B cell (primary cell): ENCODE measurements at regions of chr4 and their contacts with region 1.

Region 1: GRCh38 chr4:67545199-67546003 is at the start of gene CENPC:
- DNase-seq: peak; percentile 93
- ATAC-seq: peak; percentile 92
- H3K4me3 ChIP-seq: peak within 1 kb of the TSS; percentile 65 to 96 (median 86)
- H3K4me3 Mint-ChIP-seq: peak within 1 kb of the TSS; percentile 97
- H3K27ac ChIP-seq: peak within 1 kb of the TSS; percentile 92 to 98
- H3K27ac Mint-ChIP-seq: peak within 1 kb of the TSS; percentile 97
- H3K4me1 ChIP-seq: peaks cover 17 to 20% of the 10 kb centered on the region in 2 donors
- H3K4me1 Mint-ChIP-seq: peaks cover 49% of the 10 kb centered on the region
- H3K27me3 ChIP-seq: no peaks in the 10 kb centered on the region
- H3K27me3 Mint-ChIP-seq: no peaks in the 10 kb centered on the region
- CTCF ChIP-seq: no peak
- total RNA-seq, gene CENPC: 67.0 and 76.5 TPM in 2 replicates

Region 2: GRCh38 chr4:67366311-67366861 is 179.0 kb before region 1 on chr4:
- CTCF ChIA-PET with region 1: no interaction called
- POLR2A ChIA-PET with region 1: no interaction called
- intact Hi-C with region 1: no loop called
- DNase-seq: no peak
- ATAC-seq: no peak
- H3K4me3 ChIP-seq: no peak overlapping the region
- H3K4me3 Mint-ChIP-seq: no peak overlapping the region
- H3K27ac ChIP-seq: no peak overlapping the region
- H3K27ac Mint-ChIP-seq: no peak overlapping the region
- H3K4me1 ChIP-seq: no peaks in the 10 kb centered on the region
- H3K4me1 Mint-ChIP-seq: no peaks in the 10 kb centered on the region
- H3K27me3 ChIP-seq: no peaks in the 10 kb centered on the region
- H3K27me3 Mint-ChIP-seq: peaks cover 17% of the 10 kb centered on the region
- CTCF ChIP-seq: no peak

Region 3: GRCh38 chr4:67558493-67558892 is 13.1 kb after region 1 on chr4 and contains the start of gene STAP1:
- CTCF ChIA-PET with region 1: interaction called, 9 read pairs
- POLR2A ChIA-PET with region 1: interaction called, 4 read pairs
- intact Hi-C with region 1: loop called (anchors 1 kb)
- DNase-seq: peak; percentile 84
- ATAC-seq: peak; percentile 86
- H3K4me3 ChIP-seq: peak within 1 kb of the TSS; percentile 70 to 97 (median 83)
- H3K4me3 Mint-ChIP-seq: peak within 1 kb of the TSS; percentile 94
- H3K27ac ChIP-seq: peak within 1 kb of the TSS; percentile 63 to 82
- H3K27ac Mint-ChIP-seq: peak within 1 kb of the TSS; percentile 97
- H3K4me1 ChIP-seq: peaks cover 39 to 58% of the 10 kb centered on the region in 2 donors
- H3K4me1 Mint-ChIP-seq: peaks cover 68% of the 10 kb centered on the region
- H3K27me3 ChIP-seq: no peaks in the 10 kb centered on the region
- H3K27me3 Mint-ChIP-seq: no peaks in the 10 kb centered on the region
- CTCF ChIP-seq: no peak
- total RNA-seq, gene STAP1: 62.3 and 63.0 TPM in 2 replicates

Region 4: GRCh38 chr4:67580577-67580976 is 35.2 kb after region 1 on chr4:
- CTCF ChIA-PET with region 1: interaction called, 12 read pairs
- POLR2A ChIA-PET with region 1: interaction called, 3 read pairs
- intact Hi-C with region 1: loop called (anchors 1 kb)
- DNase-seq: no peak
- ATAC-seq: no peak
- H3K4me3 ChIP-seq: peak overlapping the region in 1 of 5 experiments; percentile 34
- H3K4me3 Mint-ChIP-seq: peak overlapping the region; percentile 72
- H3K27ac ChIP-seq: peak overlapping the region; percentile 76 to 89
- H3K27ac Mint-ChIP-seq: peak overlapping the region; percentile 91
- H3K4me1 ChIP-seq: peaks cover 40 to 52% of the 10 kb centered on the region in 2 donors
- H3K4me1 Mint-ChIP-seq: peaks cover 53% of the 10 kb centered on the region
- H3K27me3 ChIP-seq: no peaks in the 10 kb centered on the region
- H3K27me3 Mint-ChIP-seq: no peaks in the 10 kb centered on the region
- CTCF ChIP-seq: no peak

Region 5: DNA sequence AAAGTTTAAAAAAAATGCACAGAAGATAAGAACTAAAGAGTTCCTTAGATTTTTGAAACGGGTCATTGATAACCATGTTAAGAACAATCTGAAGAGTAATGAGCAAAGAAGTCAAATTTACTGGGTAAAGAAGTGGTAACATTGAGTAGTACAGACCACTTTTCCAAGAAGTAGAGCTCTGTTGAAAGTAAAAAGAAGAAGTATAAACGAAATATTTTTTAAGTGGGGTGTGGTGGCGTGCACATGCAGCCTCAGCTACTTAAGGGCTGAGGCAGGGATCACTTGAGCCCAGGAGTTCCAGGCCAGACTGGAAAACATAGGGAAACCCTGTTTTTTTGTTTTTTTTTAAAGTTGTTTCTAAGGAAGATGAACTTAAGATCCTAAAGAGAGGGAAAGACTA is 87.1 kb after region 1 on chr4:
- CTCF ChIA-PET with region 1: interaction called, 11 read pairs
- POLR2A ChIA-PET with region 1: interaction called, 3 read pairs
- intact Hi-C with region 1: loop called (anchors 2 kb)
- DNase-seq: peak; percentile 45
- ATAC-seq: peak; percentile 94
- H3K4me3 ChIP-seq: no peak overlapping the region
- H3K4me3 Mint-ChIP-seq: peak overlapping the region; percentile 50
- H3K27ac ChIP-seq: no peak overlapping the region
- H3K27ac Mint-ChIP-seq: peak overlapping the region; percentile 16
- H3K4me1 ChIP-seq: peaks cover 6 to 16% of the 10 kb centered on the region in 2 donors
- H3K4me1 Mint-ChIP-seq: peaks cover 15% of the 10 kb centered on the region
- H3K27me3 ChIP-seq: no peaks in the 10 kb centered on the region
- H3K27me3 Mint-ChIP-seq: no peaks in the 10 kb centered on the region
- CTCF ChIP-seq: no peak

Region 6: DNA sequence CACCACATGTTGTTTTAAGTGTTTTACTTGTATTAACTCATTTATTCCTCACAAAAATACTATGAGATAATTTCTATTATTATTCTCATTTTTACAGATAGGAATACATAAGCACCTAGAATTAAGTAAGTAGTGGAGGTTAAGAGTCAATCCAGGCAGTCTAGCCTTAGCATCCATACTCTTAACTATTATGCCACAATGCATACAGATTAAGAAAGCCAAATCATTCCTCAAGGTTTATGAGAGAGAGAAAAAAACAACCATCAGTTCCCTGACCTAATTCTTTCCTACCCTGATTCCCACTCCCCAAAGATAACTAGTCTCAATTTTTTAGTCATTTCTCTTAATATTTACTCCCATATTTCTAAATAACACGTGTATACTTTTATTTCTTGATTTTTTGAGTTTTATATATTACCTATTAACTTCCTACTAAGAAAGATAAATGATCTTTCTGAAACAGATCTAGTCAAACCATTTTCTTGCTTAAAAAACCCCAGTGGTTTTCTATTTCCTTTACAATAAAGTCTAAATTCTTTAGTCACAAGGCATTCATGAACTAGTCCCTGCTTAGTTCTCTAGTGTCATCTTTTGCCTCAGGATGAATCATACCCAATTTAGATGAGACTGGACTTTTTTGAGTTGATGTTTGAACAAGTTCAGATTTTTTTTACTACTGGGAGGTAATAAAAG is 139.6 kb after region 1 on chr4:
- CTCF ChIA-PET with region 1: no interaction called
- POLR2A ChIA-PET with region 1: no interaction called
- intact Hi-C with region 1: no loop called
- DNase-seq: no peak
- ATAC-seq: no peak
- H3K4me3 ChIP-seq: no peak overlapping the region
- H3K4me3 Mint-ChIP-seq: no peak overlapping the region
- H3K27ac ChIP-seq: no peak overlapping the region
- H3K27ac Mint-ChIP-seq: no peak overlapping the region
- H3K4me1 ChIP-seq: no peaks in the 10 kb centered on the region
- H3K4me1 Mint-ChIP-seq: no peaks in the 10 kb centered on the region
- H3K27me3 ChIP-seq: no peaks in the 10 kb centered on the region
- H3K27me3 Mint-ChIP-seq: no peaks in the 10 kb centered on the region
- CTCF ChIP-seq: no peak

Region 7: GRCh38 chr4:67746797-67747495 is 201.5 kb after region 1 on chr4:
- CTCF ChIA-PET with region 1: interaction called, 21 read pairs
- POLR2A ChIA-PET with region 1: interaction called, 3 read pairs
- intact Hi-C with region 1: loop called (anchors 1 kb)
- DNase-seq: peak; percentile 59
- ATAC-seq: peak; percentile 21
- H3K4me3 ChIP-seq: no peak overlapping the region
- H3K4me3 Mint-ChIP-seq: no peak overlapping the region
- H3K27ac ChIP-seq: no peak overlapping the region
- H3K27ac Mint-ChIP-seq: no peak overlapping the region
- H3K4me1 ChIP-seq: no peaks in the 10 kb centered on the region
- H3K4me1 Mint-ChIP-seq: no peaks in the 10 kb centered on the region
- H3K27me3 ChIP-seq: no peaks in the 10 kb centered on the region
- H3K27me3 Mint-ChIP-seq: no peaks in the 10 kb centered on the region
- CTCF ChIP-seq: peak; percentile 90

Region 8: GRCh38 chr4:68349649-68350360 is 804.4 kb after region 1 on chr4 and contains the start of gene YTHDC1:
- CTCF ChIA-PET with region 1: no interaction called
- POLR2A ChIA-PET with region 1: no interaction called
- intact Hi-C with region 1: loop called (anchors 1 kb)
- DNase-seq: peak; percentile 97
- ATAC-seq: peak; percentile 97
- H3K4me3 ChIP-seq: peak within 1 kb of the TSS; percentile 76 to 99 (median 93)
- H3K4me3 Mint-ChIP-seq: peak within 1 kb of the TSS; percentile 98
- H3K27ac ChIP-seq: peak within 1 kb of the TSS; percentile 91 to 94
- H3K27ac Mint-ChIP-seq: peak within 1 kb of the TSS; percentile 99
- H3K4me1 ChIP-seq: peaks cover 27 to 30% of the 10 kb centered on the region in 2 donors
- H3K4me1 Mint-ChIP-seq: peaks cover 39% of the 10 kb centered on the region
- H3K27me3 ChIP-seq: no peaks in the 10 kb centered on the region
- H3K27me3 Mint-ChIP-seq: no peaks in the 10 kb centered on the region
- CTCF ChIP-seq: no peak
- total RNA-seq, gene YTHDC1: 175 and 179 TPM in 2 replicates